ENCODE measurements at regions of chr6 and their contacts with region 1.

Region 1: DNA sequence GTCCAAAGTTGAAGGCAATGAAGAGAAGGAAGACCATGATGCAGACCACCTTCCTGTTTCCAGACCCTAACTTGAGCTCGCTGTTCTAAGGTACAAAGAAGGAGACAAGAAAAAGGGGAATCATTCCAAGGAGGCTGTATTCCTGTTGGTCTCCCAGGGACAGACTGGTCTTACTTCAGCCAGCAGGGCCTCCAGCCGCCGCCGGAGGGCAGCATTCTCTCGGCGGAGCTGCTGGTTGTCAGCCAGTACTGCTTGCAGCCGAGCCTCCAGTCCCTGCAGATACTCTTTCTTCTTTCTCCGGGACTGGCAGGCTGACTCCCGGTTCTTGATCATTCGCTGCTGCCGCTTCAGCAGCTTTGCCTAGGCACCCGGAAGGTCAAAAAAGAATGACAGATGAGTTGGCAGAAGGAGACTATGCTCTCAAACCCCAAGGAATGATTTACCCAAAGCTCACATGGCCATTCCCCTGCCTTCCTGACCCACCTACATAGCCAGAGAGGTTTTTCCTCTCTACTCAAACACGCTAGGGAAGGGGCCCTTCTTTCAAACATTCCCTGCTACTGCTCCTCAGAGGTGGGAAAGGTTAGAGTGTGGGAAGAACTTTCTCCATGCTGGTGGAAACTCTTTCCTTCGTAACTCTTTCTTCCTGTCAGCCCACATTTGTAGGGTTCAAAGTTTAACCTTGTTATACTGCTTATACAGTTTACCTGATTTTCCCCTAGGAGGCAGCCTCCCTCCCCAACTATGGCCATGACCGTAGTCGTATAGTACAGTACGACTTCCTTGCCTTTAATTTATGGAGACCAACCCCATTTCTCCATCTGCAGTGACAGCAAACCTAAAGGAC is 9.0 kb downstream of the ATF6B start:
- DNase-seq: peak; percentile 77
- H3K4me3 Mint-ChIP-seq: no peak overlapping the region
- H3K27ac Mint-ChIP-seq: no peak overlapping the region
- H3K4me1 Mint-ChIP-seq: peaks cover 28% of the 10 kb centered on the region
- H3K27me3 Mint-ChIP-seq: no peaks in the 10 kb centered on the region
- CTCF ChIP-seq: peak; percentile 91

Region 2: GRCh38 chr6:31079656-31080261 is 1039.2 kb before region 1 on chr6:
- CTCF ChIA-PET with region 1: no interaction called
- POLR2A ChIA-PET with region 1: no interaction called
- intact Hi-C with region 1: no loop called
- DNase-seq: peak; percentile 69
- H3K4me3 Mint-ChIP-seq: no peak overlapping the region
- H3K27ac Mint-ChIP-seq: no peak overlapping the region
- H3K4me1 Mint-ChIP-seq: peaks cover 16% of the 10 kb centered on the region
- H3K27me3 Mint-ChIP-seq: no peaks in the 10 kb centered on the region
- CTCF ChIP-seq: peak; percentile 62

Region 3: GRCh38 chr6:32047850-32048766 is 70.9 kb before region 1 on chr6:
- CTCF ChIA-PET with region 1: interaction called, 12 read pairs
- POLR2A ChIA-PET with region 1: no interaction called
- intact Hi-C with region 1: loop called (anchors 2 kb)
- DNase-seq: peak; percentile 61
- H3K4me3 Mint-ChIP-seq: no peak overlapping the region
- H3K27ac Mint-ChIP-seq: no peak overlapping the region
- H3K4me1 Mint-ChIP-seq: peaks cover 10% of the 10 kb centered on the region
- H3K27me3 Mint-ChIP-seq: no peaks in the 10 kb centered on the region
- CTCF ChIP-seq: peak; percentile 84

Region 4: GRCh38 chr6:32096394-32097258 is 22.4 kb before region 1 on chr6:
- CTCF ChIA-PET with region 1: interaction called, 11 read pairs
- POLR2A ChIA-PET with region 1: no interaction called
- intact Hi-C with region 1: no loop called
- DNase-seq: no peak
- H3K4me3 Mint-ChIP-seq: no peak overlapping the region
- H3K27ac Mint-ChIP-seq: no peak overlapping the region
- H3K4me1 Mint-ChIP-seq: peaks cover 16% of the 10 kb centered on the region
- H3K27me3 Mint-ChIP-seq: peaks cover 41% of the 10 kb centered on the region
- CTCF ChIP-seq: no peak

Region 5: GRCh38 chr6:32108094-32108627 is 10.8 kb before region 1 on chr6:
- CTCF ChIA-PET with region 1: interaction called, 31 read pairs
- POLR2A ChIA-PET with region 1: interaction called, 4 read pairs
- intact Hi-C with region 1: no loop called
- DNase-seq: peak; percentile 56
- H3K4me3 Mint-ChIP-seq: peak overlapping the region; percentile 52
- H3K27ac Mint-ChIP-seq: peak overlapping the region; percentile 67
- H3K4me1 Mint-ChIP-seq: peaks cover 41% of the 10 kb centered on the region
- H3K27me3 Mint-ChIP-seq: peaks cover 42% of the 10 kb centered on the region
- CTCF ChIP-seq: no peak

Region 6: GRCh38 chr6:32153564-32154513 is 34.8 kb after region 1 on chr6 and contains the start of gene PPT2:
- CTCF ChIA-PET with region 1: interaction called, 16 read pairs
- POLR2A ChIA-PET with region 1: interaction called, 3 read pairs
- intact Hi-C with region 1: loop called (anchors 1 kb)
- DNase-seq: peak; percentile 79
- H3K4me3 Mint-ChIP-seq: peak within 1 kb of the TSS; percentile 86
- H3K27ac Mint-ChIP-seq: peak within 1 kb of the TSS; percentile 83
- H3K4me1 Mint-ChIP-seq: peaks cover 18% of the 10 kb centered on the region
- H3K27me3 Mint-ChIP-seq: no peaks in the 10 kb centered on the region
- CTCF ChIP-seq: no peak
- total RNA-seq, gene PPT2: 3.7 and 5.4 TPM in 2 replicates

Region 7: GRCh38 chr6:32195652-32195901 is 76.6 kb after region 1 on chr6:
- CTCF ChIA-PET with region 1: interaction called, 4 read pairs
- POLR2A ChIA-PET with region 1: interaction called, 4 read pairs
- intact Hi-C with region 1: loop called (anchors 1 kb)
- DNase-seq: peak; percentile 99
- H3K4me3 Mint-ChIP-seq: peak overlapping the region; percentile 93
- H3K27ac Mint-ChIP-seq: peak overlapping the region; percentile 98
- H3K4me1 Mint-ChIP-seq: peaks cover 12% of the 10 kb centered on the region
- H3K27me3 Mint-ChIP-seq: no peaks in the 10 kb centered on the region
- CTCF ChIP-seq: no peak

Region 8: GRCh38 chr6:32244946-32245398 is 126.0 kb after region 1 on chr6:
- CTCF ChIA-PET with region 1: interaction called, 4 read pairs
- POLR2A ChIA-PET with region 1: no interaction called
- intact Hi-C with region 1: loop called (anchors 5 kb)
- DNase-seq: peak; percentile 74
- H3K4me3 Mint-ChIP-seq: peak overlapping the region; percentile 68
- H3K27ac Mint-ChIP-seq: peak overlapping the region; percentile 71
- H3K4me1 Mint-ChIP-seq: peaks cover 9% of the 10 kb centered on the region
- H3K27me3 Mint-ChIP-seq: peaks cover 12% of the 10 kb centered on the region
- CTCF ChIP-seq: peak; percentile 89